ENCODE measurements at regions of chr16 and their contacts with region 1.

Region 1: GRCh38 chr16:4200000-4200780 is 41.7 kb downstream of the SRL start:
- DNase-seq: peak; percentile 17 to 54 (median 32)
- H3K4me3 ChIP-seq: no peak overlapping the region
- H3K4me3 Mint-ChIP-seq: peak overlapping the region in 1 of 2 donors; percentile 48
- H3K27ac ChIP-seq: no peak overlapping the region
- H3K27ac Mint-ChIP-seq: peak overlapping the region in 1 of 7 donors; percentile 37
- H3K4me1 ChIP-seq: peaks cover 8 to 10% of the 10 kb centered on the region in 2 donors
- H3K4me1 Mint-ChIP-seq: peaks cover 11% of the 10 kb centered on the region
- H3K27me3 ChIP-seq: peaks cover 0 to 2% of the 10 kb centered on the region in 2 donors
- H3K27me3 Mint-ChIP-seq: peaks cover 2 to 21% (median 8%) of the 10 kb centered on the region in 3 donors
- CTCF ChIP-seq: peak; percentile 29

Region 2: DNA sequence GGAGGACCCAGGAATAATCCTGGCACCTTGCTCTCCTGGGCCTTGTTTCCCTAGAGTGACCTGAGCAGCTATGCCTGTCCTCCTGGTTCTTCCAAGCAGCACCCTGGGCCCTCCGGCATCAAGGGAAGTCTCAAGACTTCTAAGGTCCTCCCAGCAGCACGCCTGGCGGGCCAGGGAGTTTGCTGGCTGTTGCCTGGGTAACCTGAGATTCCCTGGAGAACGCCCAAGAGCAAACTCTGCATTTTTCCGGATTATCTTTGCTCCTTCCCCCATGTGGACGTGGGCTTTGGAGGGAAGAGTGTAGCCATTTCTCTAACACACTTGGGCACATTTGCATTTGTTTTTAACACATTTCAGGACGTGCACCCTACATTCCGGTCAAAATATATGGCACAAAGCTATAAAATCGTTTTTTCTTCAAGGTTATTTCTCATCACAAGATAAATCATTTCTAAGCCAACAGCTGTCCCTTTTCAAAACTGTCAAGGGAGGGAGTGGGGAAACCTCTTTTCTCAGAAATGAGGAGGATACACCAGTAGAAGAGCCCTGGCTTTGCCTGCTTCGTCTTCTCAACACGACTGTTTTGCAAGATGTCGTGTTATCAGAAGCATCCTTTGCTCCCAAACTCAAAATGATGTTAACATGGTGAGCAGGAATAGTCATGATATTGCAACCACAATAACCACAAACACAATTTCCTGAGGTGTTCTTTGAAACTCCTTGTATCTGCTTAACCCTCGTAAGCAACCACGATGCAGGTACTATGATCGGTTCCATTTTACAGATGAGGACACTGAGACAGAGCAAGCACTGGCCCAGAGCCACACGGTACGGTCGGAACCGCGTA is 200.5 kb before region 1 on chr16:
- intact Hi-C with region 1: loop called in 1 of 2 experiments (anchors 10 kb)
- DNase-seq: no peak
- H3K4me3 ChIP-seq: no peak overlapping the region
- H3K4me3 Mint-ChIP-seq: no peak overlapping the region
- H3K27ac ChIP-seq: no peak overlapping the region
- H3K27ac Mint-ChIP-seq: peak overlapping the region in 1 of 7 donors; percentile 28
- H3K4me1 ChIP-seq: peaks cover 5 to 8% of the 10 kb centered on the region in 2 donors
- H3K4me1 Mint-ChIP-seq: peaks cover 5% of the 10 kb centered on the region
- H3K27me3 ChIP-seq: no peaks in the 10 kb centered on the region
- H3K27me3 Mint-ChIP-seq: no peaks in the 10 kb centered on the region
- CTCF ChIP-seq: no peak

Region 3: GRCh38 chr16:4330277-4330874 is 130.2 kb after region 1 on chr16:
- intact Hi-C with region 1: no loop called
- DNase-seq: peak; percentile 64 to 75 (median 74)
- H3K4me3 ChIP-seq: no peak overlapping the region
- H3K4me3 Mint-ChIP-seq: no peak overlapping the region
- H3K27ac ChIP-seq: no peak overlapping the region
- H3K27ac Mint-ChIP-seq: no peak overlapping the region
- H3K4me1 ChIP-seq: peaks cover 17 to 21% of the 10 kb centered on the region in 2 donors
- H3K4me1 Mint-ChIP-seq: peaks cover 11% of the 10 kb centered on the region
- H3K27me3 ChIP-seq: peaks cover 0 to 15% of the 10 kb centered on the region in 2 donors
- H3K27me3 Mint-ChIP-seq: peaks cover 13 to 37% (median 36%) of the 10 kb centered on the region in 3 donors
- CTCF ChIP-seq: peak; percentile 97